ENCODE measurements at regions of chr9 and their contacts with region 1.

Region 1: DNA sequence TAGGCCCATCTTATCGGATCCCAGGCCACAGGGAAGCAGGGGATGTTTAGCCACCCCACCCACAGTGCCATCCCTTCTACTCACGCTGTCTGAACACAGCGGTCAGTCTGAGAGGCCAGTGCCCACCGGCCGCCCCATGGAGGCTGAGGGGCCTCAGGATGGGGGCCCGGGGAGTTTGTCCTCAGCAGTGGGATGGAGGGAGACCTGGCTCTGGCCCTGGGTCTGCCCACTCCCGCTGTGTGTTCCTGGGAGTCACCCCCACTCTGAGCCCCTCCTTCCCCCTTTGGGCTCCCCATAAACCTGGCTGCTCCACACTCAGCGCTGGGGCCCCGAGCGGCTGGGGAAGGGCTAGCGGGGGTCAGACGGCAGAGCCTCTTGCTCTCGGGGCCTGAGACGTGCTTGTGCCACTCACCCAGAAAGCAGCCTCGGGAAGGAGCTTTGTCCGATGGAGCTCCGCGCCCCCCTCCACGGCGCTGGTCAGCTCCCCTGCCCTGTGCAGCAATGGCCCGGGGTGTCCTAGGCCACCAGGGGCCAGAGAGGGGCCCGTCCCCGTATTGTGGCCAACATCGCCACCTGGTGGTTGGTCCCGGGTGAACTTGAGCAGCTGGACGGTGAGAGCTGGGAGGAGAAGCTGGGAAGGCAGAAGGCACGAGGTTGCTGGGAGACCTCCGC is 10.9 kb upstream of the LAMC3 start:
- DNase-seq: peak; percentile 74 to 83
- H3K4me3 ChIP-seq: no peak overlapping the region
- H3K4me3 Mint-ChIP-seq: no peak overlapping the region
- H3K27ac Mint-ChIP-seq: no peak overlapping the region
- H3K4me1 ChIP-seq: no peaks in the 10 kb centered on the region
- H3K4me1 Mint-ChIP-seq: no peaks in the 10 kb centered on the region
- H3K27me3 ChIP-seq: no peaks in the 10 kb centered on the region
- H3K27me3 Mint-ChIP-seq: peaks cover 10% of the 10 kb centered on the region
- CTCF ChIP-seq: peak; percentile 61 to 75

Region 2: DNA sequence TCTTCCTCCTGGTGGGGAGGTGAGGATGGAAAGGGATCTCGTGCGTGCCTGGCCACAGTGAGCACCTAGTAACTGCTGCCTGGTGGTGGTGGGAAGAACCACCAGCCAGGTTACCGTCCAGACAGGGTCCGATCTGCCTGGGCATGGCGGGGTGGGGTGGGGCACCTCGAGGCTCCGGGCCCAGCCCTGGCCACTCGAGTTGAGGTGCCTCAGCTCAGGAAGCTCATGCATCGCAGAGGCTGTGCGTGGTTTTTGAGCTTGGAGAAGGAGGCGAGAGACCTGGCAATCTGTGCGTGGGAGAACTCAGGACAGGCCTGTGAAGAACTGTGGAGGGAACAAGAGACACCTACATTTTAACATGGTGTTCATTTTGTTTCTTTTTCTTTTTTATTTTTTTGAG is 28.0 kb before region 1 on chr9:
- CTCF ChIA-PET with region 1: interaction called, 4 read pairs
- POLR2A ChIA-PET with region 1: interaction called, 13 read pairs
- intact Hi-C with region 1: no loop called
- DNase-seq: no peak
- H3K4me3 ChIP-seq: no peak overlapping the region
- H3K4me3 Mint-ChIP-seq: no peak overlapping the region
- H3K27ac Mint-ChIP-seq: no peak overlapping the region
- H3K4me1 ChIP-seq: no peaks in the 10 kb centered on the region
- H3K4me1 Mint-ChIP-seq: no peaks in the 10 kb centered on the region
- H3K27me3 ChIP-seq: peaks cover 3% of the 10 kb centered on the region
- H3K27me3 Mint-ChIP-seq: peaks cover 20% of the 10 kb centered on the region
- CTCF ChIP-seq: no peak

Region 3: GRCh38 chr9:131012396-131012917 is 14.4 kb after region 1 on chr9:
- CTCF ChIA-PET with region 1: interaction called, 21 read pairs
- POLR2A ChIA-PET with region 1: no interaction called
- intact Hi-C with region 1: no loop called
- DNase-seq: peak in 1 of 2 experiments; percentile 30
- H3K4me3 ChIP-seq: no peak overlapping the region
- H3K4me3 Mint-ChIP-seq: no peak overlapping the region
- H3K27ac Mint-ChIP-seq: no peak overlapping the region
- H3K4me1 ChIP-seq: no peaks in the 10 kb centered on the region
- H3K4me1 Mint-ChIP-seq: no peaks in the 10 kb centered on the region
- H3K27me3 ChIP-seq: no peaks in the 10 kb centered on the region
- H3K27me3 Mint-ChIP-seq: peaks cover 6% of the 10 kb centered on the region
- CTCF ChIP-seq: no peak